ENCODE measurements at regions of chr12 and their contacts with region 1.

Region 1: DNA sequence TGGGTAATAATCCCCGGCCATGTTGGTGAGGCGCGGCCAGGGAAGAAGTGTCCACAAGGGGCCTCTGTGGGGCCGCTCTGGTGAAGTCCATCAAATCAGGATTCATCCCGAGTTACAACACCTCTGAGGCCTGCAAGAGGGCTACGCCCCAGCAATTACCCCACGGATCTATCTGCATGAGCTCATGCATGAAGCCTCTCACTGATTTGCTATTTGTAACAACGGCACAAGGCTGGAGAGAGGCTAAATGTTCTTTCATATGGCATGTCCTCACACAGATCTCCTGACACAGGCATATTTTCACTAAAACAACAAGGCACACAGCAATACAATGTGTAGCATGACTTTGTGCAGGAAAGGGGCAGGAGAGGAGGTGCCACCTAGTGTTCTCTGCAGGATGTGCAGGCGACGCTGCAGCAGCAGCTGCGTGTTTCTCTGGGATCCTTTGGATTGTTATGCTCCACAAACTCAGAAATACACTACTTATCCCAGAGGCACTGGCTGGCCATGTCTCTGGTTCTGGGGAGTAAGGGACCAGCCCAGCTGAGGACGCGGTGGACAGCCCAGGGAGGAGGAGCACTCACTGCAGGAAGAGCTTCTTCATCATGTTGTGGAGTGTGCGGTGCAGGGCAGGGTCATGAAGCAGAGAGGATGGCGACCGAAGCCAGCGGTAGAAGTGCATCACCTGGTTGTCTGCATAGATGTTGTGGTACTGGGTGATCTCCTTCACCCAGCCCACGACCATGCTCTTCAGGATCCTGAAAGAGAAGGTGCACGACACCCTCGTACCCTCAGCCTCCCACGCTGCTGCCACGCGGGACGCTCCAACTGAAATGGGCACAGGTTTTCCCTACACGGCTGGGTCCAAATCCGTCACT is 20.2 kb downstream of the P2RX2 start:
- DNase-seq: peak; percentile 46
- ATAC-seq: peak; percentile 82
- H3K4me3 Mint-ChIP-seq: no peak overlapping the region
- H3K27ac Mint-ChIP-seq: peak overlapping the region; percentile 28; the same call in 1 of the 2 replicates
- H3K4me1 Mint-ChIP-seq: no peaks in the 10 kb centered on the region
- H3K27me3 Mint-ChIP-seq: no peaks in the 10 kb centered on the region
- CTCF ChIP-seq: peak; percentile 57; the same call in 1 of the 2 replicates

Region 2: DNA sequence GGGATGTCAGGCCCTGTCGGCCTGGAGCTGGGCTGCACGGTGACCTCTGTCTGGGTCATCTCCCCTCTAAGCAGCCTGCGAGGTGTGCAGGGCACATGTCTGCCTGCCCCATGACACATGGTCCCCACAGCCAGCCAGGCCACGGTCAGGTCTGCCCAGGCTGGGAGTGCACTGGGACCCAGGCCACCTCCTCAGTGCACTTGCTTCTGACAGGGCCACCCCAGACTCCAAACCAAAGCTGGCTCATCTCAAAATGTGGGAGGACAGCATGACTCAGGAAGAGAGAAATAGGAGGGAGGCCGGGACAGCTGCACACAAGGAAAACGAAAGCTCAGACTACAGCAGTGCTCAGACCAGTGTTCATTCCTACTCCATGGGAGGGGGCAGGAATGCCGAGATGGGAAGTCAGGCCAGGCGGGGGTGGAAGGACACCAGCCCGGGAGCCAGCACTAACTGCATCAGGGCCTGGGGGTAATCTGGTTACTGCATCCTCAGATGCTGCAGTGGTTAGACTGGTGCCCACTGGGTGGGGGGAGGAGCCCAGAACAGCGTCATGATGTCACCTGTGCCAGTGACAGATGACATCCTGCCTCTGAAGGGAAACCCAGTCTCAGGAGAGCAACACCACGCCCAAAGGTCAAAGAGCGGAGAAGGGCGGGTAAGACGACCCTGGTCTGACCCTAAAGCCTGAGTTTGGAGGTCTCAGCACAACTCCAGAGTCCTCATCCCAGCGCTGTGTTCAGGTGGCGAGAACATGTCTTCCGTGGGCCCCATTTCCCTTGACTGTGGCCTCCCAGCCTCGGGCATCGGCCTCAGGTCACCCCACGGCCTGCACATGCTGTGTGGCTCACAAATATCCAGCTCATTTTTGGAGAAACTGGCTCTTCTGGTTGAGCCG is 16.1 kb before region 1 on chr12:
- CTCF ChIA-PET with region 1: interaction called, 18 read pairs
- POLR2A ChIA-PET with region 1: no interaction called
- DNase-seq: no peak
- ATAC-seq: no peak
- H3K4me3 Mint-ChIP-seq: no peak overlapping the region
- H3K27ac Mint-ChIP-seq: peak overlapping the region; percentile 79
- H3K4me1 Mint-ChIP-seq: peaks cover 4% of the 10 kb centered on the region
- H3K27me3 Mint-ChIP-seq: peaks cover 16% of the 10 kb centered on the region
- CTCF ChIP-seq: no peak